ENCODE measurements at regions of chr12 and their contacts with region 1.

Region 1: DNA sequence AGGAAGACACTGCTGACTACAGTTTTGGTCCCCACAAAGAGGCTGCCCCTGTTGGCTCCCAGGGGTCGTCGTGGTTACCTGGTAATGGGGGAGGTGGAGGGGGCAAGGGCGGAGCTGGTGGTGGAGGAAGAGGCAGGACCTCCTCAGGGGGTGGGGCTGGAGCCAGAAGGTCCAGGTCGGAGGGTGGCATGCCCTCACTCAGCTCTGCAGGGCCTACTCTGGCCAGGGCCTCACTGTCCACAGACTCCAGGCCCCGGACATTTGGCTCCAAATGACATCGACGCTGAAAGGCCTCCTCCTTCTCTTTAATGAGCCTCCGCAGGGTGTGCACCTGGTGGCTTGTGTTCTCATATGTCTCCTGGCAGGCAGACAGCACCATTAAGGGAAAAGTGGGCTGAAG is 28.5 kb downstream of the PRPF40B start:
- DNase-seq: no peak
- H3K4me3 ChIP-seq: no peak overlapping the region
- H3K27ac ChIP-seq: no peak overlapping the region
- H3K4me1 ChIP-seq: no peaks in the 10 kb centered on the region
- H3K27me3 ChIP-seq: no peaks in the 10 kb centered on the region
- CTCF ChIP-seq: no peak
- EP300 ChIP-seq: no peak
- POLR2A ChIP-seq: no peak
- RAD21 ChIP-seq: no peak

Region 2: DNA sequence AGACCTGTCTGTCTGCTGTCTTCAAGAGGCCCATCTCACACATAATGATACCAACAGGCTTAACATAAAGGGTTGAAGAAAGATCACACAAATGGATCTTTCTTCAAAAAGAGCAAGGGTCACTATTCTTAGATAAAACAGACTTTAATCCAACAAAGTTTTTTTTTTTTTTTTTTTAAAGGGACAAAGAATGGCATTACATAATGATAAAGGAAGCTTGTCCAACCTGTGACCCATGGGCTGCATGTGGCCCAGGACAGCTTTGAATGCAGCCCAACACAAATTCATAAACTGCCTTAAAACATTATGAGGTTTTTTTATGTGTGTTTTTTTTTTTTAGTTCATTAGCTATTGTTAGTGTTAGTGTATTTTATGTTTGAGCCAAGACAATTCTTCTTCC is 39.6 kb before region 1 on chr12:
- CTCF ChIA-PET with region 1: no interaction called
- POLR2A ChIA-PET with region 1: no interaction called
- DNase-seq: no peak
- H3K4me3 ChIP-seq: no peak overlapping the region
- H3K27ac ChIP-seq: no peak overlapping the region
- H3K4me1 ChIP-seq: no peaks in the 10 kb centered on the region
- H3K27me3 ChIP-seq: no peaks in the 10 kb centered on the region; a peak in 2 of 7 replicates
- CTCF ChIP-seq: no peak
- EP300 ChIP-seq: no peak
- POLR2A ChIP-seq: no peak
- RAD21 ChIP-seq: no peak

Region 3: DNA sequence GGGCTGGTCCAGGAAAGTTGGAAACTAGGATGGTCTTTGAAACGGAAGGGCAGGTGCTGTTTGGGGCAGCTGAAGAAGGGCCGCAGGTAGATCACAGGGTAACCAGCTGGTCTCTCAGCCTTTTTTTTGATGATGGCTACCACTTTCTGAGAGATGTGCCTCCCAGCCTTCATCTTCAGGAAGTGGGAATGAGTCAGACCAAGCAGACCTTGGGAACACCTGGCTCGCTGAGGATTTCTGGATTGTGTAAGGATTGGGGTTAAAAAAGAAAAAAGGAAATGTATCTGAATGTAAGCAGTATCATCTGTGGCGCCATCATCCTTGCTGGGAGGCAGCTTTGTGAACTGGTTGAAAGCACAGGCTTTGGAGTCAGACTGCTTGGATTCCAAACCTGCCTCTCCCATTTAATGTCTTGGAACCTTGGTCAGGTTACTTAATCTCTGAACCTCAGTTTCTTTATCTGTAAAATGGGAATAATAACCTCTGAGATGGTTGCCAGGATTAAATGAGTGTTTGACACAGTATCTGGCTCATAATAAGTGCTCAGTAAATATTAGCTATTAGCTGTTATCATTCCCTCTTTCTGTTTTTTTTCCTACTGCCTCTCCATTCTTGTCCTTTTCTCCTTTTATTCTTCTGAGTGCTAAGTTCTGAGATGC is 26.8 kb before region 1 on chr12:
- CTCF ChIA-PET with region 1: no interaction called
- POLR2A ChIA-PET with region 1: no interaction called
- DNase-seq: no peak
- H3K4me3 ChIP-seq: no peak overlapping the region
- H3K27ac ChIP-seq: no peak overlapping the region
- H3K4me1 ChIP-seq: peaks cover 0 to 7% (median 3%) of the 10 kb centered on the region in 4 experiments; a peak in 6 of 7 replicates
- H3K27me3 ChIP-seq: no peaks in the 10 kb centered on the region
- CTCF ChIP-seq: no peak
- EP300 ChIP-seq: no peak
- POLR2A ChIP-seq: no peak
- RAD21 ChIP-seq: no peak

Region 4: GRCh38 chr12:49707128-49707811 is 55.4 kb after region 1 on chr12 and contains the start of gene FMNL3:
- CTCF ChIA-PET with region 1: interaction called, 222 read pairs
- POLR2A ChIA-PET with region 1: interaction called, 7 read pairs
- DNase-seq: peak; percentile 77 to 99
- H3K4me3 ChIP-seq: peak within 1 kb of the TSS; percentile 53 to 82 (median 75)
- H3K27ac ChIP-seq: no peak within 1 kb of the TSS
- H3K4me1 ChIP-seq: peaks cover 3 to 27% (median 8%) of the 10 kb centered on the region in 4 experiments
- H3K27me3 ChIP-seq: peaks cover 1 to 9% (median 6%) of the 10 kb centered on the region in 4 experiments
- CTCF ChIP-seq: peak; percentile 87 to 96 (median 88)
- EP300 ChIP-seq: no peak
- POLR2A ChIP-seq: peak in 1 of 2 experiments; percentile 45; a peak in 2 of 3 replicates
- RAD21 ChIP-seq: peak; percentile 92 to 98
- total RNA-seq, gene FMNL3: 27.6 and 29.0 TPM in 2 replicates

Region 5: GRCh38 chr12:50024805-50025186 is 372.9 kb after region 1 on chr12:
- CTCF ChIA-PET with region 1: no interaction called
- POLR2A ChIA-PET with region 1: no interaction called
- DNase-seq: no peak
- H3K4me3 ChIP-seq: peak overlapping the region; percentile 81 to 86 (median 82)
- H3K27ac ChIP-seq: no peak overlapping the region
- H3K4me1 ChIP-seq: no peaks in the 10 kb centered on the region
- H3K27me3 ChIP-seq: no peaks in the 10 kb centered on the region
- CTCF ChIP-seq: no peak
- EP300 ChIP-seq: no peak
- POLR2A ChIP-seq: no peak
- RAD21 ChIP-seq: no peak

Measured in H1 (cell line).